Activated CD4-positive, alpha-beta memory T cell treated with anti-CD3 and anti-CD28 coated beads for 36 hours (primary cell): ENCODE measurements at regions of chrX and their contacts with region 1.

Region 1: DNA sequence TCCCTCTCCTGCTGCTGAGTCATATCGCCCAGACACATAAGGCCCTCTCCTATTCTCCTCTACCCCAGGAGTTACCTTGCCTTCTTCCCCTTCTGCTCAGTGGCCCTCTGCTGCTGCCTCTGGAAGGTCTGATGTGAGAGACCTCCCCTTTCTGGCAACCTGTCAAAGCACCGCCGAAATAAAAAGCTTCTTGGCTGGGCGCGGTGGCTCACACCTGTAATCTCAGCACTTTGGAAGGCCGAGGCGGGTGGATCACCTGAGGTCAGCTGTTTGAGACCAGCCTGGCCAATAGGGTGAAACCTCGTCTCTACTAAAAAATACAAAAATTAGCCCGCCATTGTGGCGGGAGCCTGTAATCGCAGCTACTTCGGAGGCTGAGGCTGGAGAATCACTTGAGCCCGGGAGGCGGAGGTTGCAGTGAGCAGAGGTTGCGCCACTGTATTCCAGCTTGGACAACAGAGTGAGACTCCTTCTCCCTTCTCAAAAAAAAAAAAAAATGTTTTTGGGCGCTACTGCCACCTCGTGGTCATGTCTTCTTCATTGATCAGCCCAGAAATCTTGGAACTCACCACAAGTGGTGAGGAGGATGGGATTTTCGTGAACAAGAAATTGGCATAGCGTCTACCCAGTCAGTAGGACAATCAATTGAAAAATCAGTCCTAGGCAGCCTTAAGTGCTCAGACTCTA is 8.6 kb upstream of the ZXDA start:
- DNase-seq: peak; percentile 18
- H3K4me3 Mint-ChIP-seq: no peak overlapping the region
- H3K27ac Mint-ChIP-seq: no peak overlapping the region
- H3K4me1 Mint-ChIP-seq: no peaks in the 10 kb centered on the region
- H3K27me3 Mint-ChIP-seq: no peaks in the 10 kb centered on the region

Region 2: GRCh38 chrX:56764153-56764974 is 1154.5 kb before region 1 on chrX:
- CTCF ChIA-PET with region 1: no interaction called
- POLR2A ChIA-PET with region 1: no interaction called
- intact Hi-C with region 1: loop called (anchors 10 kb)
- DNase-seq: peak; percentile 75
- H3K4me3 Mint-ChIP-seq: peak overlapping the region; percentile 72
- H3K27ac Mint-ChIP-seq: peak overlapping the region; percentile 90
- H3K4me1 Mint-ChIP-seq: peaks cover 49% of the 10 kb centered on the region
- H3K27me3 Mint-ChIP-seq: no peaks in the 10 kb centered on the region

Region 3: DNA sequence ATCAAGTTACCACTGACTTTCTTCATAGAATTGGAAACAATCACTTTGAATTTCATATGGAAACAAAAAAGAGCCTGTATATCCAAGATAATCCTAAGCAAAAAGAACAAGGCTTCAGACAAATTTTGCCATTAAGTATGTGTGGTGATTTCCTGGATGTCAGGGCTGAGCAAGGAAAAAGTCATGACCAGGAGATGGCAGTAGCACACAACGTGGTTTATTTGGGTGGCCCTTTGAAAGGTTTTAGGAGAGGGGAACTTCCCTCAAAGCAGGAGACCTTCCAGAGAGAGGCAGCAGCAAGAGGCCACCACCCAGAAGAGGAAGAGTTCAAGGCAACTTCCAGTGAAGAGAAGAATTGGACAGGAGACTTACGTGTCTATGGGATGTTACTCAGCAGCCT is 345.1 kb before region 1 on chrX:
- CTCF ChIA-PET with region 1: no interaction called
- POLR2A ChIA-PET with region 1: no interaction called
- intact Hi-C with region 1: loop called (anchors 5 kb)
- DNase-seq: peak; percentile 27
- H3K4me3 Mint-ChIP-seq: no peak overlapping the region
- H3K27ac Mint-ChIP-seq: no peak overlapping the region
- H3K4me1 Mint-ChIP-seq: no peaks in the 10 kb centered on the region
- H3K27me3 Mint-ChIP-seq: no peaks in the 10 kb centered on the region

Region 4: GRCh38 chrX:57595381-57595811 is 323.5 kb before region 1 on chrX:
- CTCF ChIA-PET with region 1: no interaction called
- POLR2A ChIA-PET with region 1: no interaction called
- intact Hi-C with region 1: loop called (anchors 5 kb)
- DNase-seq: no peak
- H3K4me3 Mint-ChIP-seq: peak overlapping the region; percentile 72
- H3K27ac Mint-ChIP-seq: peak overlapping the region; percentile 71
- H3K4me1 Mint-ChIP-seq: peaks cover 35% of the 10 kb centered on the region
- H3K27me3 Mint-ChIP-seq: no peaks in the 10 kb centered on the region

Region 5: DNA sequence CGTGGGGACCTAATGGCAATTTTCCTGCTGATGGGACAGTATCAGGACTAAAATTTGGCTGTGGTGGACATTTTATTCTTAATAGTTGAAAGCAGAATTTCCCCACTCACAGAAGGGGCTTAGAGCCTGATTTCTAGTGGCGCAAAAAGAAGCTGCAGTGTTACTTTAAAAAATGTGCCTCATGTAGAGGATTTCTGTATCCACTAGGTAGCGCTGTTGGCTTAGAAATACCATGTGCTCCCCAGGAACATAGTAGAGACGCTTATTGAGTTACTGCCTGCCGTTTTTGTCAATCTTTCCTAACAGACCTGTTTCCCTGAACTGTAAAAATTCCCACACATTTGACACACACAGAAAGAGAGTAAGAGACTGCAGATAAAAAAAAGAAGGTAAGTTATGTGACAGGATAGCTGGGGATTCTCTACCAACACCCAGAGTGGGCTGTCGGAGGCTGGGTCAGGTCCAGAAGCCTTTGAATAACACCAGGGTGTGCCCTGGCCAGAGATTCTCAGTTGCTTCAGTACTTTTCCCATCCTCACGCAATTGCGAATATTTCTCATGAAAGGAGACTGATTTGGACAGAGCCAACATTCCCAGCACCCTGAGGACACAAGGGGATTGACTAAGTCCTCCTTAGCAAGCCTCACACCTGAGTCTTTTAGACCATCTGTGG is 97.1 kb before region 1 on chrX:
- CTCF ChIA-PET with region 1: interaction called, 12 read pairs
- POLR2A ChIA-PET with region 1: no interaction called
- intact Hi-C with region 1: loop called (anchors 1 kb)
- DNase-seq: peak; percentile 9
- H3K4me3 Mint-ChIP-seq: no peak overlapping the region
- H3K27ac Mint-ChIP-seq: no peak overlapping the region
- H3K4me1 Mint-ChIP-seq: peaks cover 2% of the 10 kb centered on the region
- H3K27me3 Mint-ChIP-seq: no peaks in the 10 kb centered on the region

Region 6: GRCh38 chrX:58025979-58026378 is 107.1 kb after region 1 on chrX:
- CTCF ChIA-PET with region 1: no interaction called
- POLR2A ChIA-PET with region 1: no interaction called
- intact Hi-C with region 1: loop called (anchors 5 kb)
- DNase-seq: peak; percentile 21
- H3K4me3 Mint-ChIP-seq: no peak overlapping the region
- H3K27ac Mint-ChIP-seq: no peak overlapping the region
- H3K4me1 Mint-ChIP-seq: peaks cover 2% of the 10 kb centered on the region
- H3K27me3 Mint-ChIP-seq: no peaks in the 10 kb centered on the region